Ascending aorta (tissue), 2 donors: ENCODE measurements at regions of chr11 and their contacts with region 1.

Region 1: GRCh38 chr11:925496-926321 is at the start of gene AP2A2:
- DNase-seq: peak; percentile 40 to 93
- H3K4me3 ChIP-seq: peak within 1 kb of the TSS; percentile 82 to 100
- H3K27ac ChIP-seq: peak within 1 kb of the TSS; percentile 86 to 89
- H3K4me1 ChIP-seq: peaks cover 0 to 15% of the 10 kb centered on the region in 2 donors
- H3K27me3 ChIP-seq: no peaks in the 10 kb centered on the region
- CTCF ChIP-seq: peak; percentile 49 to 98 (median 65)
- total RNA-seq, gene AP2A2: 118 TPM

Region 2: DNA sequence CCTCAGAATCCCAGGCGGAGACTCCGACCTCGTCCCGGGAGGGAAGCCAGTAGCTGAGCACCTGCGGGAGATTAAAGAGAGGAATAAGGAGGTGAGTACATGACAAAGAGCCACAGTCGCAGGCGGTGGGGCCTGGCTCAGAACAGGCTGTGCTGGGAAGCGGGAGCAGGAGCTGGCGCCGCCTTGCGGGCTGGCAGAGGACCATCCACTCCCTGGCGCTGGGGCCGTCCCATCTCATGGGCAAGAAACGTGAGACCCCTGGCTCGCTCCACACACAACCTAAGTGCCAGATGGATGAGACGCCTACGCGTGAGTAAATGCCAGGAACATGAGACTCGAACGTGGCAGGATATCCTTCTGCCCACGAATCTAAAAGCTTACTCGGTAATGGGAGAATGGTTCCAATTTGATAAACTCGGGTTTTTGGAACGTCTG is 142.1 kb before region 1 on chr11:
- intact Hi-C with region 1: no loop called
- DNase-seq: peak; percentile 22 to 83
- H3K4me3 ChIP-seq: peak overlapping the region in 1 of 2 donors; percentile 17
- H3K27ac ChIP-seq: peak overlapping the region; percentile 13 to 20
- H3K4me1 ChIP-seq: peaks cover 0 to 8% of the 10 kb centered on the region in 2 donors
- H3K27me3 ChIP-seq: peaks cover 3% of the 10 kb centered on the region
- CTCF ChIP-seq: peak; percentile 58 to 76 (median 61)

Region 3: GRCh38 chr11:910589-911195 is 15.0 kb before region 1 on chr11 and contains the start of gene CHID1:
- intact Hi-C with region 1: loop called (anchors 1 kb)
- DNase-seq: peak; percentile 29 to 92
- H3K4me3 ChIP-seq: peak within 1 kb of the TSS; percentile 86 to 98
- H3K27ac ChIP-seq: peak within 1 kb of the TSS; percentile 83 to 92
- H3K4me1 ChIP-seq: peaks cover 0 to 16% of the 10 kb centered on the region in 2 donors
- H3K27me3 ChIP-seq: no peaks in the 10 kb centered on the region
- CTCF ChIP-seq: no peak
- total RNA-seq, gene CHID1: 69.4 TPM

Region 4: GRCh38 chr11:1373536-1374214 is 448.0 kb after region 1 on chr11:
- intact Hi-C with region 1: no loop called
- DNase-seq: no peak
- H3K4me3 ChIP-seq: no peak overlapping the region
- H3K27ac ChIP-seq: no peak overlapping the region
- H3K4me1 ChIP-seq: no peaks in the 10 kb centered on the region
- H3K27me3 ChIP-seq: no peaks in the 10 kb centered on the region
- CTCF ChIP-seq: no peak